ENCODE measurements at regions of chr11 and their contacts with region 1.

Region 1: GRCh38 chr11:65329944-65330403 is 3.7 kb upstream of the DPF2 start:
- DNase-seq: peak; percentile 92 to 96 (median 93)
- H3K4me3 ChIP-seq: peak overlapping the region in 5 of 7 experiments; percentile 2 to 54 (median 35)
- H3K27ac ChIP-seq: peak overlapping the region in 1 of 2 experiments; percentile 46
- H3K4me1 ChIP-seq: peaks cover 8 to 16% (median 15%) of the 10 kb centered on the region in 4 experiments
- H3K27me3 ChIP-seq: no peaks in the 10 kb centered on the region

Region 2: GRCh38 chr11:65204646-65205601 is 125.0 kb before region 1 on chr11:
- CTCF ChIA-PET with region 1: interaction called, 11 read pairs
- POLR2A ChIA-PET with region 1: no interaction called
- DNase-seq: peak; percentile 56 to 65 (median 59)
- H3K4me3 ChIP-seq: no peak overlapping the region
- H3K27ac ChIP-seq: no peak overlapping the region
- H3K4me1 ChIP-seq: peaks cover 0 to 10% (median 4%) of the 10 kb centered on the region in 4 experiments
- H3K27me3 ChIP-seq: no peaks in the 10 kb centered on the region

Region 3: GRCh38 chr11:65290448-65291165 is 39.4 kb before region 1 on chr11:
- CTCF ChIA-PET with region 1: interaction called, 16 read pairs
- POLR2A ChIA-PET with region 1: no interaction called
- DNase-seq: peak; percentile 65 to 83 (median 82)
- H3K4me3 ChIP-seq: peak overlapping the region in 1 of 7 experiments; percentile 26
- H3K27ac ChIP-seq: peak overlapping the region in 1 of 2 experiments; percentile 43
- H3K4me1 ChIP-seq: peaks cover 11 to 30% (median 21%) of the 10 kb centered on the region in 4 experiments
- H3K27me3 ChIP-seq: no peaks in the 10 kb centered on the region

Region 4: DNA sequence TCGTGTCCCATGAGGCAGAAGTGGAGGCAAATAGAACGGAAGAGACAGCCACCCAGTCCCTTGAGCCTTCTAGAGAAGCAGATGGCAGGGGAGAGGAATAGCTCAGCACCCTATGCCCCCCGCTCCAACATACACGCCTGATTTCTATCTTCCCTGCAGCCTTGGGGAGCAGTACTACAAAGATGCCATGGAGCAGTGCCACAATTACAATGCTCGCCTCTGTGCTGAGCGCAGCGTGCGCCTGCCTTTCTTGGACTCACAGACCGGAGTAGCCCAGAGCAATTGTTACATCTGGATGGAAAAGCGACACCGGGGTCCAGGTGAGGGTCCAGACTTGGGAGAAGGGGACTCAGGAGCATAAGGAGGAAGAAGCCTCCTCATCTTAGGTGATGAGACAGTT is 10.3 kb after region 1 on chr11:
- CTCF ChIA-PET with region 1: interaction called, 33 read pairs
- POLR2A ChIA-PET with region 1: no interaction called
- DNase-seq: no peak
- H3K4me3 ChIP-seq: no peak overlapping the region
- H3K27ac ChIP-seq: peak overlapping the region in 1 of 2 experiments; percentile 47
- H3K4me1 ChIP-seq: peaks cover under 1 to 5% (median 4%) of the 10 kb centered on the region in 4 experiments
- H3K27me3 ChIP-seq: no peaks in the 10 kb centered on the region

Region 5: DNA sequence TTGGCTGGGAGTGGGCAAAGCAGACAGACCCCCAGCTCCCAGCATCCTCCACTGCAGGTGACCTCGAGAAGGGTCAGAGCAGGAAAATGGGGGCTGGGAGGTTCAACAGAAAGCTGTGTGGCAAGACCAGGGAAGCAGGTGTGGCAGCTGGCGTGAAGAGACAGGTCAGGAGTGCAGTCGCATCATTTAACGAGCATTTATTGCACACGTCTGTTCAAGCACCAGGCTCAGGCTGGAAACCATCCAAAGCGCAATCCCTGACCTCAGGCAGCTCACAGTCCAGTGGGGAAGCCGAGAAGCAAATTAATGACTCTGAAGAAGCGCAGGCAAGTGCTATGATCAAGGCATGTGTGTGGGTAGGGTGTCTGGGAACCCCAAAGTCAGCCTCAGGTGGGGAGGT is 45.0 kb after region 1 on chr11:
- CTCF ChIA-PET with region 1: no interaction called
- POLR2A ChIA-PET with region 1: no interaction called
- DNase-seq: no peak
- H3K4me3 ChIP-seq: no peak overlapping the region
- H3K27ac ChIP-seq: no peak overlapping the region
- H3K4me1 ChIP-seq: peaks cover 0 to 44% (median 31%) of the 10 kb centered on the region in 4 experiments
- H3K27me3 ChIP-seq: no peaks in the 10 kb centered on the region

Region 6: DNA sequence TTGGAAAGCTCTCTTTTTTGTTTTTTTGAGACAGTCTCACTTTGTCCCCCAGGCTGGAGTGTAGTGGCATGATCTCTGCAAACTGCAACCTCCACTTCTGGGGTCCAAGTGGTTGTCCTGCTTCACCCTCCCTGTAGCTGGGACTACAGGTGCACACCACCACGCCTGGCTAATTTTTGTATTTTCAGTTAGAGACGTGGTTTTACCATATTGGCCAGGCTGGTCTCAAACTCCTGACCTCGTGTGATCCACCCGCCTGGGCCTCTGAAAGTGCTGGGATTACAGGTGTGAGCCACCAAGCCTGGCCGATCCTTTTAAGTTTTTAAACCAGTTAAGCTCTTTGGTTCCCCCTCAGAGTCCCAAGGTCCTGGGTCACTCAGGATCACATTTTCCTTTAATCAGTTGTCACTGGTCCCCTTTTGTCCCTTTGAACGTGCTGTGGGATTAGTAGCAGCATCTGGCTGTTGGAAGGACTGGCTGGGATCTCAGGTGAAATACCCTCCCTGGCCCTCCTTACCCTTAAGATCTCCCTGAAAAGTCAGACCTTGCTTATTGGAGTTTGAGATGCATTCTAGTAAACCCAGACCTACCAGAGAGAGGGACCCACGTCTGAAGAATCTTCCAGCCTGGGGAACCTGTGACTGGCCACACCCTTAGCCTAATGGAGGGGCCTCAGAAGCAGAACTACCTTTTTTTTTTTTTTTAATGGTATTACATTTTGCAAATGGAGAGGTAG is 177.0 kb after region 1 on chr11:
- CTCF ChIA-PET with region 1: interaction called, 4 read pairs
- POLR2A ChIA-PET with region 1: interaction called, 10 read pairs
- DNase-seq: peak; percentile 85 to 96 (median 96)
- H3K4me3 ChIP-seq: peak overlapping the region in 2 of 7 experiments; percentile 28 to 100
- H3K27ac ChIP-seq: peak overlapping the region in 1 of 2 experiments; percentile 100
- H3K4me1 ChIP-seq: peaks cover 18 to 46% (median 39%) of the 10 kb centered on the region in 4 experiments
- H3K27me3 ChIP-seq: no peaks in the 10 kb centered on the region